Activated CD4-positive, alpha-beta memory T cell treated with anti-CD3 and anti-CD28 coated beads for 36 hours (primary cell): ENCODE measurements at regions of chr12 and their contacts with region 1.

Region 1: GRCh38 chr12:42360747-42361403 is 34.9 kb downstream of the PPHLN1 start:
- DNase-seq: no peak
- H3K4me3 Mint-ChIP-seq: no peak overlapping the region
- H3K27ac Mint-ChIP-seq: peak overlapping the region; percentile 50
- H3K4me1 Mint-ChIP-seq: peaks cover 38% of the 10 kb centered on the region
- H3K27me3 Mint-ChIP-seq: no peaks in the 10 kb centered on the region

Region 2: GRCh38 chr12:42237052-42237852 is 123.6 kb before region 1 on chr12:
- CTCF ChIA-PET with region 1: no interaction called
- POLR2A ChIA-PET with region 1: no interaction called
- intact Hi-C with region 1: loop called (anchors 5 kb)
- DNase-seq: peak; percentile 84
- H3K4me3 Mint-ChIP-seq: peak overlapping the region; percentile 87
- H3K27ac Mint-ChIP-seq: peak overlapping the region; percentile 56
- H3K4me1 Mint-ChIP-seq: peaks cover 34% of the 10 kb centered on the region
- H3K27me3 Mint-ChIP-seq: no peaks in the 10 kb centered on the region

Region 3: DNA sequence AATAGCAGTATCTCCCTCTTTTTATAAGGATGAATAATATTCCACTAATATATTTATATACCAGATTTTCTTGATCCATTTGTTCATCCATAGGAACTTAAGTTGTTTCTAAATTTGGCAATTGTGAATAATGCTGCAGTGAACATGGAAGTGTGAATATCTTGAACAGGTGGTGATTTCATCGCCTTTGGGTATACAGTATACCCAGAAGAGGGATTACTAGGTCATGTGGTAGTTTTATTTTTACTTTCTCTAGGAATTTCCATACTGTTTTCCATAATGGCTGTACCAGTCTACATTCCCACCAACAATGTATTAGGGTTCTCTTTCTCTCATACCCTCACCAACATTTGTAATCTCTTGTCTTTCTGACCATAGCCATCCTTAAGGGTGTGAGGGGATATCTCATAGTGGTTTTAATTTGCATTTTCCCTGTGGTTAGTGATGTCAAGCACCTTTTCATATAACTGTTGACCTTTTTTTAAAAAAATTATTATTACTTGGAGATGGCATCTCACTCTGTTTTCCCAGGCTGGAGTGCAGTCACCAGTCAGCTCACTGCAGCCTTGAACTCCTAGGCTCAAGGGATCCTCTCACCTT is 14.4 kb before region 1 on chr12:
- CTCF ChIA-PET with region 1: interaction called, 3 read pairs
- POLR2A ChIA-PET with region 1: interaction called, 4 read pairs
- intact Hi-C with region 1: loop called (anchors 2 kb)
- DNase-seq: no peak
- H3K4me3 Mint-ChIP-seq: no peak overlapping the region
- H3K27ac Mint-ChIP-seq: no peak overlapping the region
- H3K4me1 Mint-ChIP-seq: peaks cover 28% of the 10 kb centered on the region
- H3K27me3 Mint-ChIP-seq: no peaks in the 10 kb centered on the region

Region 4: DNA sequence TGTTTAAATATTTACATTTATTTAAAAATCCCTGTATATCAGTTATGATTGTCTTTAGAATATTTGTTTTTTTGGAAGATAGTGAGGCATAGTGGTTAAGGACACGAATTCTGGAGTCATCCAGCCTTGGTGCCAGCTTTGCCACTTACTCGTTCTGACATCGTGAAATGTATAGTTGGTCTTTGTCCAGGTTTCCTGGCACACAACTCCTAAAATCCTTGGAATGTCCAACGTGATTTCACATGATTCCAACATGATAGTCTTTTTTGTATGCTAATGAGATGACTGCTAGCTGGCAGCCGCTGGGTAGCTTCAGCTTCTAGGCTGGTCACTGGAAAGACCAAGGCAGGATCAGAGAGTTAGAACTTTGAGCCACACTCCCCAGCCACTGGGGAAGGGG is 163.8 kb after region 1 on chr12:
- CTCF ChIA-PET with region 1: no interaction called
- POLR2A ChIA-PET with region 1: no interaction called
- intact Hi-C with region 1: no loop called
- DNase-seq: no peak
- H3K4me3 Mint-ChIP-seq: no peak overlapping the region
- H3K27ac Mint-ChIP-seq: no peak overlapping the region
- H3K4me1 Mint-ChIP-seq: no peaks in the 10 kb centered on the region
- H3K27me3 Mint-ChIP-seq: peaks cover 6% of the 10 kb centered on the region